Naive thymus-derived CD4-positive, alpha-beta T cell (primary cell): ENCODE measurements at regions of chr6 and their contacts with region 1.

Region 1: GRCh38 chr6:79777713-79778579 is 146.8 kb downstream of the SH3BGRL2 start:
- DNase-seq: peak; percentile 68 to 94 (median 79)
- ATAC-seq: peak; percentile 96
- H3K4me3 ChIP-seq: peak overlapping the region; percentile 60
- H3K4me3 Mint-ChIP-seq: peak overlapping the region; percentile 68 to 83 (median 80)
- H3K27ac ChIP-seq: no peak overlapping the region
- H3K27ac Mint-ChIP-seq: peak overlapping the region in 6 of 9 donors; percentile 0 to 80 (median 44)
- H3K4me1 ChIP-seq: peaks cover 0 to 6% of the 10 kb centered on the region in 2 donors
- H3K4me1 Mint-ChIP-seq: peaks cover 7 to 9% (median 7%) of the 10 kb centered on the region in 7 donors
- H3K27me3 ChIP-seq: no peaks in the 10 kb centered on the region
- H3K27me3 Mint-ChIP-seq: peaks cover 0 to 4% (median 0%) of the 10 kb centered on the region in 5 donors

Region 2: DNA sequence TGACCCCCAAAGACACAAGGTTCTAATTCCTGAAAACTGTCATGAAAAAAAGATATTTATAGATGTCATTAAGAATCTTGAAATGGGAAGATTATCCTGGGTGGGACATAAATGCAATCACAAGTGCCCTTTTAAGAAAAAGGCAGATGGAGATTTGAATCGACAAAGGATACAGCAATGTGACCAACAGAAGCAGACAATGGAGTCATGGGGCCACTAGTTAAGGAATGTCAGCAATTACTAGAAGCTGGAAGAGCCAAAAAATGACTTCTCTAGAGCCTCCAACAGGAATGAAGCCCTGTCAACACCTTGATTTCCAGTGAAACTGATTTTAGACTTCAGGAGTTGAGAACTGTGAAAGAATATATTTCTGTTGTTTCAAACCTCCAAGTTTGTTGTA is 1676.6 kb before region 1 on chr6:
- CTCF ChIA-PET with region 1: no interaction called
- POLR2A ChIA-PET with region 1: no interaction called
- intact Hi-C with region 1: no loop called
- DNase-seq: no peak
- ATAC-seq: no peak
- H3K4me3 ChIP-seq: no peak overlapping the region
- H3K4me3 Mint-ChIP-seq: no peak overlapping the region
- H3K27ac ChIP-seq: no peak overlapping the region
- H3K27ac Mint-ChIP-seq: no peak overlapping the region
- H3K4me1 ChIP-seq: no peaks in the 10 kb centered on the region
- H3K4me1 Mint-ChIP-seq: no peaks in the 10 kb centered on the region
- H3K27me3 ChIP-seq: no peaks in the 10 kb centered on the region
- H3K27me3 Mint-ChIP-seq: no peaks in the 10 kb centered on the region

Region 3: GRCh38 chr6:78867370-78868040 is 910.4 kb before region 1 on chr6 and contains the start of gene IRAK1BP1:
- CTCF ChIA-PET with region 1: no interaction called
- POLR2A ChIA-PET with region 1: no interaction called
- intact Hi-C with region 1: loop called in 1 of 2 experiments (anchors 1 kb)
- DNase-seq: peak; percentile 39 to 79 (median 76)
- ATAC-seq: peak; percentile 94
- H3K4me3 ChIP-seq: peak within 1 kb of the TSS; percentile 85
- H3K4me3 Mint-ChIP-seq: peak within 1 kb of the TSS; percentile 91 to 100 (median 98)
- H3K27ac ChIP-seq: peak within 1 kb of the TSS; percentile 68
- H3K27ac Mint-ChIP-seq: peak within 1 kb of the TSS; percentile 87 to 97 (median 96)
- H3K4me1 ChIP-seq: peaks cover 0 to 5% of the 10 kb centered on the region in 2 donors
- H3K4me1 Mint-ChIP-seq: peaks cover 6 to 33% (median 27%) of the 10 kb centered on the region in 7 donors
- H3K27me3 ChIP-seq: no peaks in the 10 kb centered on the region
- H3K27me3 Mint-ChIP-seq: no peaks in the 10 kb centered on the region
- total RNA-seq, gene IRAK1BP1: 0.71 to 3.6 (median 3.1) TPM

Region 4: GRCh38 chr6:79233611-79234149 is 544.3 kb before region 1 on chr6:
- CTCF ChIA-PET with region 1: no interaction called
- POLR2A ChIA-PET with region 1: no interaction called
- intact Hi-C with region 1: loop called (anchors 1 to 5 kb)
- DNase-seq: peak; percentile 34 to 77 (median 54)
- ATAC-seq: peak; percentile 63
- H3K4me3 ChIP-seq: peak overlapping the region; percentile 89
- H3K4me3 Mint-ChIP-seq: peak overlapping the region; percentile 92 to 100 (median 98)
- H3K27ac ChIP-seq: peak overlapping the region; percentile 62
- H3K27ac Mint-ChIP-seq: peak overlapping the region; percentile 64 to 96 (median 90)
- H3K4me1 ChIP-seq: peaks cover 4 to 8% of the 10 kb centered on the region in 2 donors
- H3K4me1 Mint-ChIP-seq: peaks cover 9 to 42% (median 30%) of the 10 kb centered on the region in 7 donors
- H3K27me3 ChIP-seq: no peaks in the 10 kb centered on the region
- H3K27me3 Mint-ChIP-seq: no peaks in the 10 kb centered on the region

Region 5: DNA sequence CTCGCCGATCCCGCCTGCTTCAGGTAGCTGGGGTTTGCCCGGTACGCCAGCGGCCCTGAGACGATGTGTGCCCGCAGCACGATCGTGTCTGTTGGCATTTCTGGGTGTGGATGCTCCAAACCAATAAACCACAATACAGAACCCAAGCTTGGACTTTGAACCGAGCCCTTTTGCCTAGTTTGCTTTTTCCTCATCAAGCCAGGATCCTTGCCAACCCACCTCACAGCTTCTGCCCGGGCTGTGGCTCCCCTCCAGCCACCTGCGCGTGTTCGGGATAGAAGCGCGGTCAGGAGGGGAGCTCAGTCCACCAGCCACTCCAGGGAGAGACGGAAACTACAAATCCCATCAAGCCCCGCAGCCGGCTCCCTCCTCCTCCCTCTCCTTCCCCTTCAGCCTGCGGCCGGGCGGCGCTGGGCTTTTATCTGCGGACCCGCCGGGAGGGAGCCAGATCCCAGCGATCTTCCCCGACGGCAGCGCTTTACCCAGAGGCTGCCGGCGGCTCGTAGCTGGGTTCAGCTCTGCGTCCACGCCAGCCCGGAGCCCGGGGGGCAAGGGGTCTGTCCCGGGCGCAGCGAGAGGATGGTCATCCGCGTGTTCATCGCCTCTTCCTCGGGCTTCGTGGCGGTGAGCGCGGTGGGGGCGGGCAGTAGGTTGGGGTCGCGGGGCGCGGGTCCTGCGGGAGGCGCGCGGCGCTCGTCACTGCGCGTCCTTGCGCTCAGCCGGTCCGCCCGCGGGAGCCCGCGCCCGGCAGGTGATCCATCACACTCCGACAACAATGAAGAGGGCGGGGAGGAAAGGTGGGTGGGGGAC is 146.9 kb before region 1 on chr6 and contains the start of gene SH3BGRL2:
- CTCF ChIA-PET with region 1: no interaction called
- POLR2A ChIA-PET with region 1: no interaction called
- intact Hi-C with region 1: loop called in 1 of 2 experiments (anchors 1 kb)
- DNase-seq: peak in 5 of 9 donors; percentile 10 to 22 (median 16)
- ATAC-seq: peak; percentile 67
- H3K4me3 ChIP-seq: peak within 1 kb of the TSS; percentile 51
- H3K4me3 Mint-ChIP-seq: peak within 1 kb of the TSS; percentile 79 to 93 (median 86)
- H3K27ac ChIP-seq: no peak within 1 kb of the TSS
- H3K27ac Mint-ChIP-seq: peak within 1 kb of the TSS in 1 of 9 donors; percentile 65
- H3K4me1 ChIP-seq: no peaks in the 10 kb centered on the region
- H3K4me1 Mint-ChIP-seq: peaks cover 6 to 16% (median 11%) of the 10 kb centered on the region in 7 donors
- H3K27me3 ChIP-seq: peaks cover 0 to 13% of the 10 kb centered on the region in 2 donors
- H3K27me3 Mint-ChIP-seq: peaks cover 26 to 68% (median 54%) of the 10 kb centered on the region in 5 donors
- total RNA-seq, gene SH3BGRL2: 0.17 to 2.9 (median 1.8) TPM

Region 6: DNA sequence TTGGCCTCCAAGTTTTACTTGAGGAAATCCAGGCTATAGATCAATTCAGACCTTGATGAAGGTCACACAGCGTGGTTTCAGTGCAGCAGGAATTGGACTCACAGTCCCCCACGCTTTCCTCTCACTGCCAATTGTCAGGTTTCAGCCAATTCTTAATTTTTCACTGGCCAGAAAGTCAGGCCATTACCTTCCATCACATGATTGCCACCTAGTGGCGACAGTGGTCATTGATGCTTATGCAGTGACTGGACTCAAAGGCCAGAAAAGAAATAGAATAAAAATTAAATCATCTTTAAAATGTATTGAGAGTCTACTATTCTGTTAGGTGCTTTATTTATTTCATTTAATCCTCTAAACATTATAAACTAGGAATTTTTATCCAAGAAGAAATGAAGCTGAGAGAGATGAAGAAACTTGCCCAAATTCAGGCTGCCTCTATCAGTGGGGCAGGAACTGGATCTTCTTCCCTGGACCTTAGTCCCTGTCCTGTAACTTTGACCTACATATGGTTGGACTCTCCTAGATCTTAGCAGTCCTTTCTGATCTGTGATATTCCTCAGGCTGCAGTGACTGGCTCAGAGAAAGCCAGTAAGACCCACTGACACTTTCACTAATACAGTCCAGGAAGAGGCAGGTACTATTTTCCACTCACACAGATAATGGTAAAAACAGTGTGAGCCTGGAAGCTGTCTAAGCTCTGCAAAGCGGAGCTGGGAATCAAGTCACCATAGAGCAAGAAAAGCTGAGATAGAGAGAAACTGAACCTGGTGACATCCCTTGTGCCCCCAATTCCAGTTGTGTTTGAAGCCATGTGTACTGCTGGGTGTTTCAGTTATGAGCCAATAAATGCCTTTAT is 36.1 kb after region 1 on chr6:
- CTCF ChIA-PET with region 1: no interaction called
- POLR2A ChIA-PET with region 1: no interaction called
- intact Hi-C with region 1: loop called (anchors 1 kb)
- DNase-seq: peak; percentile 2 to 53 (median 32)
- ATAC-seq: peak; percentile 64
- H3K4me3 ChIP-seq: no peak overlapping the region
- H3K4me3 Mint-ChIP-seq: no peak overlapping the region
- H3K27ac ChIP-seq: no peak overlapping the region
- H3K27ac Mint-ChIP-seq: no peak overlapping the region
- H3K4me1 ChIP-seq: no peaks in the 10 kb centered on the region
- H3K4me1 Mint-ChIP-seq: no peaks in the 10 kb centered on the region
- H3K27me3 ChIP-seq: no peaks in the 10 kb centered on the region
- H3K27me3 Mint-ChIP-seq: peaks cover 2 to 20% (median 5%) of the 10 kb centered on the region in 5 donors

Region 7: GRCh38 chr6:79949233-79949632 is 171.3 kb after region 1 on chr6:
- CTCF ChIA-PET with region 1: no interaction called
- POLR2A ChIA-PET with region 1: no interaction called
- intact Hi-C with region 1: loop called in 1 of 2 experiments (anchors 5 kb)
- DNase-seq: peak in 8 of 9 donors; percentile 36 to 61 (median 44)
- ATAC-seq: peak; percentile 65
- H3K4me3 ChIP-seq: no peak overlapping the region
- H3K4me3 Mint-ChIP-seq: peak overlapping the region in 5 of 10 donors; percentile 10 to 55 (median 16)
- H3K27ac ChIP-seq: no peak overlapping the region
- H3K27ac Mint-ChIP-seq: peak overlapping the region in 1 of 9 donors; percentile 56
- H3K4me1 ChIP-seq: peaks cover 4 to 16% of the 10 kb centered on the region in 2 donors
- H3K4me1 Mint-ChIP-seq: peaks cover 13 to 25% (median 19%) of the 10 kb centered on the region in 7 donors
- H3K27me3 ChIP-seq: no peaks in the 10 kb centered on the region
- H3K27me3 Mint-ChIP-seq: peaks cover 32 to 57% (median 43%) of the 10 kb centered on the region in 5 donors

Region 8: DNA sequence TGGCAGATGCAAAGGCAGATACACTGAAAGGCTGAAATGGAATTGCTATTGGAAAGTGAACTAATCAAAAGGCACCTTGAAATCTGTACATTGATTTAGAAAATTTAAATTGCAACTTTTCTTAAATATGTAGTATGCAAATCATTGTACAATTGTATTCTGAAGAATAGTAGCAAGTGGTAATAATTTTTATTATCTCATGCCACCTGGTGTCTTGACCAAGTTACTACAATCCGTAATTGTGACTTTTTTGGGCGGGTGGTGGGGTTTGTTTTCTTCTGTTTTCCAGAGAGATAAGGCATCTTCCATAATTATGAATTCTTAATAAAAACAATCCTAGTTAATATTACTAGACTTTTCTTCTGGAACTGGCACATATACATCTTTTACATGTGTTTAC is 316.1 kb after region 1 on chr6:
- CTCF ChIA-PET with region 1: interaction called, 5 read pairs
- POLR2A ChIA-PET with region 1: no interaction called
- intact Hi-C with region 1: loop called (anchors 1 to 2 kb)
- DNase-seq: peak in 5 of 9 donors; percentile 31 to 36 (median 31)
- ATAC-seq: peak; percentile 67
- H3K4me3 ChIP-seq: no peak overlapping the region
- H3K4me3 Mint-ChIP-seq: no peak overlapping the region
- H3K27ac ChIP-seq: no peak overlapping the region
- H3K27ac Mint-ChIP-seq: no peak overlapping the region
- H3K4me1 ChIP-seq: no peaks in the 10 kb centered on the region
- H3K4me1 Mint-ChIP-seq: peaks cover 0 to 8% (median 7%) of the 10 kb centered on the region in 7 donors
- H3K27me3 ChIP-seq: no peaks in the 10 kb centered on the region
- H3K27me3 Mint-ChIP-seq: peaks cover 7 to 28% (median 12%) of the 10 kb centered on the region in 5 donors